Thyroid gland (tissue), 4 donors: ENCODE measurements at regions of chr5 and their contacts with region 1.

Region 1: GRCh38 chr5:99029172-99029571 is 100.4 kb upstream of the CHD1 start:
- DNase-seq: no peak
- H3K4me3 ChIP-seq: no peak overlapping the region
- H3K27ac ChIP-seq: no peak overlapping the region
- H3K4me1 ChIP-seq: peaks cover 0 to 3% of the 10 kb centered on the region in 2 donors
- H3K27me3 ChIP-seq: no peaks in the 10 kb centered on the region
- CTCF ChIP-seq: no peak
- POLR2A ChIP-seq: no peak

Region 2: GRCh38 chr5:98428806-98429205 is 600.4 kb before region 1 on chr5:
- intact Hi-C with region 1: no loop called
- DNase-seq: peak; percentile 5
- H3K4me3 ChIP-seq: no peak overlapping the region
- H3K27ac ChIP-seq: no peak overlapping the region
- H3K4me1 ChIP-seq: no peaks in the 10 kb centered on the region
- H3K27me3 ChIP-seq: no peaks in the 10 kb centered on the region
- CTCF ChIP-seq: no peak
- POLR2A ChIP-seq: no peak

Region 3: GRCh38 chr5:98905857-98906690 is 123.1 kb before region 1 on chr5:
- intact Hi-C with region 1: loop called (anchors 2 kb)
- DNase-seq: no peak
- H3K4me3 ChIP-seq: no peak overlapping the region
- H3K27ac ChIP-seq: no peak overlapping the region
- H3K4me1 ChIP-seq: no peaks in the 10 kb centered on the region
- H3K27me3 ChIP-seq: no peaks in the 10 kb centered on the region
- CTCF ChIP-seq: peak in 5 of 6 experiments; percentile 49 to 91 (median 76)
- POLR2A ChIP-seq: no peak